IMR-90 (cell line): ENCODE measurements at regions of chr1 and their contacts with region 1.

Region 1: DNA sequence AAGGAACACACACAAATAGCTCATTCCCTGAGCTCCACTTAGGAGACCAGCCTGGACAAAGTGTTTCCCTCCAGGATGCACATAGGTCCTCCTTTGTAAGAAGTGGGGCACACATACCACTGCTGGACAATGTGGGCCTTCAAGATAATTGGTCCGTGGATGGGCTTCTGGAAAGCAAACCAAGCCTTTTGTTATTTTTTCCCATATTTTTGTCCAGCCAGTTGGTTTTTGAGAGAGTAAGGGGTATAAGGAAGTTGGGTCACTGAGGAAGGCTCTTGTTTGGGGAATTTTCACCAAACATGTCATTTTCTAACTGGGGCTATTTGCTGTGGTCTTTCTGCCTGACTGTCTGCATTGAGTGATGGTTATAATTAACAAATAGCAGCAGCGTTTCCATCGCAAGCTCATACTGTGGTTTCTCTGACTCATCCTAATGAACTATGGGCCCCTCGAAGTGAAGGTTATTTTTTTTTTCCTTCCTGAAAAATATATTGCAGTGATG is 306.3 kb upstream of the DUSP10 start:
- DNase-seq: peak; percentile 74
- ATAC-seq: peak; percentile 59
- H3K4me3 ChIP-seq: no peak overlapping the region
- H3K27ac ChIP-seq: no peak overlapping the region
- H3K4me1 ChIP-seq: peaks cover 20% of the 10 kb centered on the region
- H3K27me3 ChIP-seq: no peaks in the 10 kb centered on the region; the same call in 1 of the 2 replicates
- CTCF ChIP-seq: no peak
- POLR2A ChIP-seq: no peak
- RAD21 ChIP-seq: no peak

Region 2: GRCh38 chr1:221868593-221869303 is 179.4 kb before region 1 on chr1:
- CTCF ChIA-PET with region 1: no interaction called
- POLR2A ChIA-PET with region 1: no interaction called
- dilution Hi-C with region 1: no loop called
- in situ Hi-C with region 1: no loop called
- intact Hi-C with region 1: loop called (anchors 10 kb)
- DNase-seq: peak; percentile 87
- ATAC-seq: peak; percentile 78
- H3K4me3 ChIP-seq: no peak overlapping the region
- H3K27ac ChIP-seq: no peak overlapping the region
- H3K4me1 ChIP-seq: peaks cover 11% of the 10 kb centered on the region
- H3K27me3 ChIP-seq: no peaks in the 10 kb centered on the region
- CTCF ChIP-seq: no peak
- POLR2A ChIP-seq: no peak
- RAD21 ChIP-seq: peak; percentile 12; the same call in 1 of the 2 replicates

Region 3: DNA sequence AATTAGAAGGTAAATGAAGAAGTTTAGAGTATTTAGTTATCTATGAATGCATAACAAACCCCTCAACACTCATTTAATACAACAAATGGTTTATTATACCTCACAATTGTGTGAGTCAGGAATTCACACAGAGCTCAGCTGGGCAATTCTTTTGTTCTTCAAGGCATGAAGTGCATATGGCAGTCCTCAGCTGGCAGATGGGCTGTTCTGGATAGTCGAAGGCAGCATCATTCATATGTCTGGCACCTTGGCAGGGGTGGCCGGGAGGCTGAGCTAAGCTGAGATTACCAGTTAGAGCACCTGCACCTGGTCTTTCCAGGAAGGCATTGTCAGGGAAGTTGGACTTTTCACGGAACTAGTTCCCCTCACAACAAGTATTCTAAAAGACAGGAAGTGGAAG is 20.0 kb before region 1 on chr1:
- CTCF ChIA-PET with region 1: no interaction called
- POLR2A ChIA-PET with region 1: no interaction called
- dilution Hi-C with region 1: no loop called
- in situ Hi-C with region 1: no loop called
- intact Hi-C with region 1: no loop called
- DNase-seq: no peak
- ATAC-seq: no peak
- H3K4me3 ChIP-seq: no peak overlapping the region
- H3K27ac ChIP-seq: no peak overlapping the region
- H3K4me1 ChIP-seq: peaks cover 2% of the 10 kb centered on the region; the same call in 1 of the 2 replicates
- H3K27me3 ChIP-seq: no peaks in the 10 kb centered on the region; the same call in 1 of the 2 replicates
- CTCF ChIP-seq: no peak
- POLR2A ChIP-seq: no peak
- RAD21 ChIP-seq: no peak

Region 4: DNA sequence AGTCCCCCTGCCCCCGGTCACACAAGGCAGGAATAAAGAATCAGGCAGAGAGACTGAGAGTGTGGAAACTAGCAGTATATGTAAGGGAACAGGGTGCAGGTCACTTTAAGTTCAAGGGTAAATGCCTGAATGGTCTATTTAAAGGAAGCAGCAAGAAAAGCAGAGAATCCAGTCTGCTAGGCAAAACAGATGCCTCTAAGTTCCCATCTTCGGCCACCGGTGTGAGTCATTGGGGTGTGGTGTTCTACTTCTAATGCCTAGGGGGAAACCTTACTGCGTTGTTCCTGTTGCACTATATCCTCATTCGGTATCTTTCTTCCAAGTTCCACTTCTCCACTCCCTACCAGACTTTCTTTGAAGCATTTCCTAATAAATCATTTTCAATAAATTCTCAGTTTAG is 239.9 kb after region 1 on chr1:
- CTCF ChIA-PET with region 1: no interaction called
- POLR2A ChIA-PET with region 1: no interaction called
- dilution Hi-C with region 1: no loop called
- in situ Hi-C with region 1: no loop called
- intact Hi-C with region 1: no loop called
- DNase-seq: peak; percentile 45
- ATAC-seq: no peak
- H3K4me3 ChIP-seq: no peak overlapping the region
- H3K27ac ChIP-seq: no peak overlapping the region
- H3K4me1 ChIP-seq: peaks cover 17% of the 10 kb centered on the region
- H3K27me3 ChIP-seq: no peaks in the 10 kb centered on the region
- CTCF ChIP-seq: 0 out of 2 replicates have a peak, but pooled peaks have one; percentile 1
- POLR2A ChIP-seq: no peak
- RAD21 ChIP-seq: peak; percentile 8; the same call in 1 of the 2 replicates